Ascending aorta (tissue), 2 donors: ENCODE measurements at regions of chr1 and their contacts with region 1.

Region 1: GRCh38 chr1:67748630-67749029 is 63.6 kb downstream of the GADD45A start:
- DNase-seq: no peak
- H3K4me3 ChIP-seq: peak overlapping the region; percentile 18 to 37
- H3K27ac ChIP-seq: peak overlapping the region; percentile 89 to 94
- H3K4me1 ChIP-seq: peaks cover 16 to 87% of the 10 kb centered on the region in 2 donors
- H3K27me3 ChIP-seq: no peaks in the 10 kb centered on the region
- CTCF ChIP-seq: no peak

Region 2: DNA sequence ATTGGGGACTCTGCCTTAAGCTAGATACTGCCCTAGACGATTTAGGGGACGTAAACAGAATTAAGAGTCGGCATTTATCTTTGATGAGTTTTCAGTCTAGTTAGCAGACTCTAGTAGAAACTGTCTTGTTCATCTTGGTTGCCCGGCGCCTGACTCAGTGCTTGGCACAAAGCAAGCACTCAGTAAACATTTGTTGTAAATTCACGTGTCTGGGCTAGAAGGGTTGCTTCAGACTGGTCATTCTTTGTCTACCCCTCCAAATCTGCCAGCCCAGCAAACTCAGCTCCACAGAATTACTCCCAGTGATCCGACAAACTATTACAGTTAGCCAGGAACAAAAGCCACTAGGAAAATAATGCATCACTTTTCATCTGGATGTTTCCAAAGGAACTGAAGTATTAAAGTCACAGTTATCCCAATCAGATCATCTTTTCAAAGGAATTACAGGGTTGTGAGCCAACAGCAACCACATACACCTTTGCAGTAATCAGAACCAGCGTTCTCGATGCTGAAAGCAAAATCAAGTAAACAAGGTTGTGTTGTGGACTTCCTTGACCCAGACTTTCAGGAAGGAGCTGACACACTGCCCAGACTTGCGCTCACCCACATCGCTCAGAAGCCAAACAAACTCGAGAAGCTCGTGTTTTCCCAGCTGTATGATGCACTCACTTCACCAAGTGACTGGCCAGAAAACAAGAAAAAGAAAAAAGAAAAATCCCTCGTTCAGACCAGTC is 130.2 kb before region 1 on chr1:
- intact Hi-C with region 1: loop called (anchors 5 kb)
- DNase-seq: peak; percentile 44 to 90
- H3K4me3 ChIP-seq: peak overlapping the region; percentile 10 to 45
- H3K27ac ChIP-seq: peak overlapping the region; percentile 80 to 82
- H3K4me1 ChIP-seq: peaks cover 2 to 14% of the 10 kb centered on the region in 2 donors
- H3K27me3 ChIP-seq: no peaks in the 10 kb centered on the region
- CTCF ChIP-seq: no peak

Region 3: DNA sequence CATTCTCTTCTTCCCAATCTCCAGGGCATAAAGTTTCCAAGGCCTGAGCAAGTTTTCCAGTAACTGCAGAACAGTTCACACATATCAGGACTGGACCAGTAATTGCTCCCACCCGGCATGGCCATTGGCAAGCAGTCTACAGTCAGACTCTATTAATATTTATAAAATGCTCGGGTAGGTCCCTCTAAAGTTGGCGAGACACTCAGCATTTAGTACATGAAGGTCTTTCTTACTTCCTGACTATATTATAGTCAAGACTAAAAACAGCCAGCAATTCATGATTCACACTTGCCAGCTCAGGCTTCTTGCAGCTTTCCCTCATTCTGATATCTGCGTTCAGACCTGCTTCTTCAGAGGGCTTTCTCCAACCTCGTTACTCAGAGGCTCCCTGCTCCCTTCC is 38.2 kb before region 1 on chr1:
- intact Hi-C with region 1: loop called (anchors 1 kb)
- DNase-seq: peak; percentile 15 to 86
- H3K4me3 ChIP-seq: no peak overlapping the region
- H3K27ac ChIP-seq: peak overlapping the region; percentile 67 to 80
- H3K4me1 ChIP-seq: peaks cover 30 to 76% of the 10 kb centered on the region in 2 donors
- H3K27me3 ChIP-seq: no peaks in the 10 kb centered on the region
- CTCF ChIP-seq: no peak

Region 4: GRCh38 chr1:67723620-67724019 is 25.0 kb before region 1 on chr1:
- intact Hi-C with region 1: loop called (anchors 2 kb)
- DNase-seq: no peak
- H3K4me3 ChIP-seq: no peak overlapping the region
- H3K27ac ChIP-seq: peak overlapping the region; percentile 66 to 72
- H3K4me1 ChIP-seq: peaks cover 6 to 46% of the 10 kb centered on the region in 2 donors
- H3K27me3 ChIP-seq: no peaks in the 10 kb centered on the region
- CTCF ChIP-seq: no peak

Region 5: GRCh38 chr1:67735806-67736627 is 12.6 kb before region 1 on chr1:
- intact Hi-C with region 1: loop called (anchors 1 kb)
- DNase-seq: peak; percentile 30 to 89
- H3K4me3 ChIP-seq: peak overlapping the region in 1 of 2 donors; percentile 20
- H3K27ac ChIP-seq: peak overlapping the region; percentile 77 to 80
- H3K4me1 ChIP-seq: peaks cover 33 to 74% of the 10 kb centered on the region in 2 donors
- H3K27me3 ChIP-seq: no peaks in the 10 kb centered on the region
- CTCF ChIP-seq: no peak

Region 6: GRCh38 chr1:67785847-67786753 is 37.5 kb after region 1 on chr1:
- intact Hi-C with region 1: no loop called
- DNase-seq: no peak
- H3K4me3 ChIP-seq: no peak overlapping the region
- H3K27ac ChIP-seq: peak overlapping the region; percentile 34 to 61
- H3K4me1 ChIP-seq: peaks cover 4 to 57% of the 10 kb centered on the region in 2 donors
- H3K27me3 ChIP-seq: no peaks in the 10 kb centered on the region
- CTCF ChIP-seq: no peak